ENCODE measurements at regions of chr7 and their contacts with region 1.

Region 1: DNA sequence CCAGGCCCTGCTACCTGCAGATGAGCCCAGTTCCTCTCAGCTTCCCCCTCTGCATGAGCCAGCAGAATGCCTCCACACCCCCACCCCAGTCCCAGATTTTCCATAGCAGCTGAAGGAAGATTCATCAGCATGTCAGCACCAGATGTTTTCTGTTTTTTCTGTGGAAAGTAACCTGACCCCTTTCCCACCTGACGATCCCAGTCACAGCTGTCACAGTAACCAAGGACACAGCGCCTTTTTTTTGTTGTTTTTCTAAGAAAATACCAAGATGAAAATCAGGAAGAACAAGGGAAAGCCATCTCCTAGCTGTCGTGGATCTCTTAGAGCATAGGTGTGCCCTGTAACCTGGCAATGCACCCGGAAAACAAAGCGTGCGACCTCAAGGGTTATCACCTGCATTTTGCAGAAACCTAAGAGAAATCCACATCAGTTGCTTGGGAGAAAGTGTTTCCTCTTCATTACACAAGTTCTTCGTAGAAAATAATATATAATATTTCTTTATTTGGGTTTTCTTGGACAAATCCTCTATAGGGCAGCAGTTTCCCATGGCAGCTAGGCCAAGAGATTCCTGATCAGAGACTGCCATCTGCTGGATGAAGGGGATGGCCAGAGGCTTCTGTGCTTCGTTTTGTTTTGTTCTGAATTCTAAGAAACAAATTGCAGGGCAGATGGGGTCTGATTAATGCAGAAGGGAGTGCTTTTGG is 401.9 kb downstream of the TNS3 start:
- DNase-seq: no peak
- H3K4me3 Mint-ChIP-seq: no peak overlapping the region
- H3K27ac Mint-ChIP-seq: no peak overlapping the region
- H3K4me1 Mint-ChIP-seq: no peaks in the 10 kb centered on the region
- H3K27me3 Mint-ChIP-seq: no peaks in the 10 kb centered on the region

Region 2: GRCh38 chr7:45902820-45903219 is 1277.1 kb before region 1 on chr7:
- CTCF ChIA-PET with region 1: no interaction called
- POLR2A ChIA-PET with region 1: no interaction called
- intact Hi-C with region 1: loop called (anchors 10 kb)
- DNase-seq: no peak
- H3K4me3 Mint-ChIP-seq: no peak overlapping the region
- H3K27ac Mint-ChIP-seq: no peak overlapping the region
- H3K4me1 Mint-ChIP-seq: no peaks in the 10 kb centered on the region
- H3K27me3 Mint-ChIP-seq: peaks cover 5% of the 10 kb centered on the region

Measured in activated CD4-positive, alpha-beta memory T cell treated with anti-CD3 and anti-CD28 coated beads for 36 hours (primary cell).